Common myeloid progenitor, CD34-positive (primary cell): ENCODE measurements at regions of chr1 and their contacts with region 1.

Region 1: DNA sequence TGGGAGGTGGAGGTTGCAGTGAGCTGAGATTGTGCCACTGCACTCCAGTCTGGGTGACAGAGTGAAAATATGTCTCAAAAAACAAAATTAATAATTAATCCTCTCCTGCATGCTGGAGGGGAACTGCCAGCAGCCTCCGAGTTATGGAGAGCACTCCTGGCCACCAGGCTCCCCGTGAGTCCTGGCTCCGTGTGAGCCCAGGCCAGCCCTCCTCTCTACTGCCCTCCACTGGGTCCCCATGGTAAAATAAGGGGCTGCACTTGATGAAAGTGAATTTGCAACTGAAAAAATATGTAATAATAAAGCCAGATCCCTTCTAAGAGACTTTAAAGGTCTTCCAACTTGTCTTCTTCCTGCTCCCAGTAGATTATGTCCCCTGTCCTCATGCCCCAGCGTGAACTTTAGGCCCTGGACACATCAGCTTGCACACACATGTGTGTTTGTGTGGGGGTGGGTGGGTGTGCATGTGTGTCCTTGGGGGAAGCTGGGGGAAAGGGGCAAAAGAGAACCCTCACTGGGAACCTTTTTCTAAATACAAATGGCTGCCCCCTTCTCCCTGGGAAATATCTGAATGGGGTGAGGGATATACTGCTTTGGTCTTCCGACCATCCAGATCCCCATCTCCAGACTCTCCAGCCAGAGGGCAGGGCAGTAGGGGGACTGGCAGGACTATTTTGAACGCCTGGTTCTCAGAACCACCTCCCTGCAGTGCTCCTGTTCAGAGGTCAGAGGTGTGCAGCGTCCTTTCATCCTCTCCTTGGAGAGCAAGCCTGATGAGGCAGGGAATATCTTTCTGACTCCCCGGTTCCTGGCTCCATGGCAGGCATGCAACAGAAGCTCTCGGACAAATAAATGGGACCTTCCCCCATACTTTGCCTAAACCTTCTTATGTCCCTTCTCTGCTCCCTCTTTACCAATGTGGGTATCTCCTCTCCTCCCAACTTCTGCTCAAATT is 26.2 kb downstream of the NEK2 start:
- DNase-seq: peak in 1 of 3 donors; percentile 66
- H3K4me3 ChIP-seq: no peak overlapping the region
- H3K27ac ChIP-seq: no peak overlapping the region
- H3K4me1 ChIP-seq: no peaks in the 10 kb centered on the region
- H3K27me3 ChIP-seq: peaks cover 0 to 2% (median 0%) of the 10 kb centered on the region in 5 experiments

Region 2: GRCh38 chr1:211589782-211590721 is 59.2 kb before region 1 on chr1:
- CTCF ChIA-PET with region 1: interaction called, 10 read pairs
- POLR2A ChIA-PET with region 1: no interaction called
- DNase-seq: peak; percentile 78 to 91 (median 89)
- H3K4me3 ChIP-seq: peak overlapping the region in 1 of 7 experiments; percentile 25
- H3K27ac ChIP-seq: no peak overlapping the region
- H3K4me1 ChIP-seq: peaks cover 7 to 42% (median 17%) of the 10 kb centered on the region in 4 experiments
- H3K27me3 ChIP-seq: no peaks in the 10 kb centered on the region

Region 3: DNA sequence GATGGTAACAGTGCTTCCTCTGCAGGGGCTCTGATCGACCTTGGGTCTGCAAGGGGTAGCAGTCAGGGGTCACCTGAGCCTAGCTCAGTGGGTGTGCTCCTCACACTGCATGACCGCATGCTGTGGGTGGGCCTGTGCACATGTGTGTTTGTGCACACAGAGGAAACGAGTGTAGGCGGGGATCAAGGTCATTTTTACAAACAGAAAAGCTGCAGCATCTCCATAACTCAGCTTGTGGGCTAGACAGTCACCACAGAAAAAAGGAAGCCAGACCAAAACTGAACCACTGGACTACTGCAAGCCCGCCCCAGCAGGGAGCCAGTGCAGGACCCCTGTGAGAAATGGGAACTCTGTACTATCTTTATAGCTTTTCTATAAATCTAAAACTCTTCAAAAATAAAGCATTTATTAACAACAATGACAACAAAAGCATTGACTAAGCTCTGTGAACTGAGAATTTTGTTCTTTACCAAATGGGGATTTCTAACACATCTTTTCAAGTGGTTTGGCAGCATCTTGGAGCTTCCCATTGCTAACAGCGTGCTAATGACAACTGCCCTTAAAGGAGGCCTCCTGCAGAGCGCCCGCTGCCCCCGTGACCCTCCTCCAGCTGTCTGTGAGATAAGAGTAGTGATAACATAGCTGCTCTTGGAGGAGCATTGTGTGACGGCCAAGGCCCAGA is 46.0 kb after region 1 on chr1:
- CTCF ChIA-PET with region 1: no interaction called
- POLR2A ChIA-PET with region 1: no interaction called
- DNase-seq: peak in 2 of 3 donors; percentile 59 to 67
- H3K4me3 ChIP-seq: no peak overlapping the region
- H3K27ac ChIP-seq: no peak overlapping the region
- H3K4me1 ChIP-seq: peaks cover 0 to 20% (median 15%) of the 10 kb centered on the region in 4 experiments
- H3K27me3 ChIP-seq: no peaks in the 10 kb centered on the region